ENCODE measurements at regions of chr12 and their contacts with region 1.

Region 1: GRCh38 chr12:47949441-47950308 is 13.7 kb upstream of the TMEM106C start:
- DNase-seq: peak; percentile 66
- H3K4me3 ChIP-seq: no peak overlapping the region
- H3K27ac ChIP-seq: no peak overlapping the region
- H3K4me1 ChIP-seq: no peaks in the 10 kb centered on the region
- H3K27me3 ChIP-seq: peaks cover 0 to 14% of the 10 kb centered on the region in 2 experiments
- CTCF ChIP-seq: peak; percentile 94 to 98
- POLR2A ChIP-seq: no peak

Region 2: GRCh38 chr12:47850153-47851084 is 99.3 kb before region 1 on chr12:
- CTCF ChIA-PET with region 1: interaction called, 10 read pairs
- POLR2A ChIA-PET with region 1: no interaction called
- dilution Hi-C with region 1: no loop called
- intact Hi-C with region 1: no loop called
- DNase-seq: no peak
- H3K4me3 ChIP-seq: no peak overlapping the region
- H3K27ac ChIP-seq: no peak overlapping the region
- H3K4me1 ChIP-seq: peaks cover 7% of the 10 kb centered on the region
- H3K27me3 ChIP-seq: no peaks in the 10 kb centered on the region
- CTCF ChIP-seq: no peak
- POLR2A ChIP-seq: no peak

Region 3: DNA sequence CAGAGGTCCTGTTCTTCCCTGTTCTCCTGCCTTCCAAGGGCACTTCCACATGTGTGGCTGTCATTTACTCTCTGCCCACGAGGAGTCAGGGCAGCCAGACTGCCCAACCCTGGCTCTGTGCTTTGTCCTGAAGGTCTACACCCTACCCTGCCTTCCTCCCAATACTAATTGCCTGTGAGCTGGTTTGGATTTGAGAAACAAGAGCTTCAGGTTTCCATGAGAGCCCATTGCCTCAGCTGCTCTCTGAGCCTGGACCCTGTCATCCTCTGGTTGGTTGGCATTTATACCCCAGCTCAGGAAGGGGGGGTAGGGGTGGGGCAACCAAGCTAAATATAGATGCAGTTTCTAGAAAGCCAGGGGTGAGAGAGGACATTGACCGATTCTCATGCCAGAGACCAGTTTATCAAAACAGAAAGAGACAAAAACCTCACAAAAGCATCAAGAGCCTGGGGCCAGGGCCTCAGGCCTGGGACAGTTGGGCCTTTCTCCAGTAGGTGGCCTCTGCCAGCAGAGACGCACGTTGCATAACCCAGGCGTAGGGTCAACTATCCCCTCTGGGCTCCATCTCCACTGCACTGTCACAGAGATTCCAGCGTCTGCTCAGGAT is 79.4 kb before region 1 on chr12:
- CTCF ChIA-PET with region 1: interaction called, 13 read pairs
- POLR2A ChIA-PET with region 1: no interaction called
- dilution Hi-C with region 1: no loop called
- intact Hi-C with region 1: loop called (anchors 1 kb)
- DNase-seq: no peak
- H3K4me3 ChIP-seq: no peak overlapping the region
- H3K27ac ChIP-seq: no peak overlapping the region
- H3K4me1 ChIP-seq: peaks cover 6% of the 10 kb centered on the region
- H3K27me3 ChIP-seq: no peaks in the 10 kb centered on the region
- CTCF ChIP-seq: peak; percentile 11 to 41
- POLR2A ChIP-seq: no peak

Region 4: DNA sequence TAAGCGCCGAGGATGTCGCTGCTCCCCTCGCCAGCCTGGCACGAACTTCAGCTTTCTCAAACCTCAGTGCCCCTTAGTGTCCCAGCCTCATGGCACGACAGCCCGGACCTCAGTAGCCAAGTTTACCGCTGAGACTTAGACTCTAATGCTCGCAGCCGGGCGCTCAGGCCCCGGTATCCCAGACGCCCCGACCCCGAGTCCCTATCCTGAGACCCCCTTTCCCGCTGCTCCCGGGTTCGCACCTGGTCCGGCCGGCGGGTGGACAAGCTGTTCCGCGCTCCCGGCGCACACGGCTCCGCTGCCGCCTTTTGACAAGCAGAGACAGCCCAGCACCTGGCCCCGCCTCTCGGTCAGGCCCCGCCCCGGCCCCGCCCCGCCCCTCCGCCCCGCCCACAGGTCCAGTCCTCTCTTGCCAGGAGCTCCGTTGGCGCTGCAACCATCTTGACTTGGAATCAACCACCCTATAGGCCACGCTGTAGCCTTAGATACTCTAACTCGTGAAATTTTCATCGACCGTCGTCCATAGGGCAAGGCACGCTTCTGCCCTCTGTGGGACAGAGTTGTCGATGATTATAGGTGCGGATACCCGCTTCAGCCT is 44.9 kb before region 1 on chr12 and contains the start of gene VDR:
- CTCF ChIA-PET with region 1: interaction called, 13 read pairs
- POLR2A ChIA-PET with region 1: no interaction called
- dilution Hi-C with region 1: no loop called
- intact Hi-C with region 1: loop called (anchors 5 kb)
- DNase-seq: peak; percentile 61
- H3K4me3 ChIP-seq: peak within 1 kb of the TSS; percentile 36 to 59 (median 44)
- H3K27ac ChIP-seq: no peak within 1 kb of the TSS
- H3K4me1 ChIP-seq: peaks cover 20% of the 10 kb centered on the region
- H3K27me3 ChIP-seq: peaks cover 30 to 34% of the 10 kb centered on the region in 2 experiments
- CTCF ChIP-seq: peak in 1 of 2 donors; percentile 19
- POLR2A ChIP-seq: no peak
- total RNA-seq, gene VDR: 0.48 and 0.73 TPM in 2 replicates

Region 5: GRCh38 chr12:47935184-47935583 is 14.5 kb before region 1 on chr12:
- CTCF ChIA-PET with region 1: interaction called, 11 read pairs
- POLR2A ChIA-PET with region 1: no interaction called
- dilution Hi-C with region 1: no loop called
- intact Hi-C with region 1: no loop called
- DNase-seq: no peak
- H3K4me3 ChIP-seq: no peak overlapping the region
- H3K27ac ChIP-seq: no peak overlapping the region
- H3K4me1 ChIP-seq: no peaks in the 10 kb centered on the region
- H3K27me3 ChIP-seq: peaks cover 19 to 25% of the 10 kb centered on the region in 2 experiments
- CTCF ChIP-seq: no peak
- POLR2A ChIP-seq: no peak

Region 6: DNA sequence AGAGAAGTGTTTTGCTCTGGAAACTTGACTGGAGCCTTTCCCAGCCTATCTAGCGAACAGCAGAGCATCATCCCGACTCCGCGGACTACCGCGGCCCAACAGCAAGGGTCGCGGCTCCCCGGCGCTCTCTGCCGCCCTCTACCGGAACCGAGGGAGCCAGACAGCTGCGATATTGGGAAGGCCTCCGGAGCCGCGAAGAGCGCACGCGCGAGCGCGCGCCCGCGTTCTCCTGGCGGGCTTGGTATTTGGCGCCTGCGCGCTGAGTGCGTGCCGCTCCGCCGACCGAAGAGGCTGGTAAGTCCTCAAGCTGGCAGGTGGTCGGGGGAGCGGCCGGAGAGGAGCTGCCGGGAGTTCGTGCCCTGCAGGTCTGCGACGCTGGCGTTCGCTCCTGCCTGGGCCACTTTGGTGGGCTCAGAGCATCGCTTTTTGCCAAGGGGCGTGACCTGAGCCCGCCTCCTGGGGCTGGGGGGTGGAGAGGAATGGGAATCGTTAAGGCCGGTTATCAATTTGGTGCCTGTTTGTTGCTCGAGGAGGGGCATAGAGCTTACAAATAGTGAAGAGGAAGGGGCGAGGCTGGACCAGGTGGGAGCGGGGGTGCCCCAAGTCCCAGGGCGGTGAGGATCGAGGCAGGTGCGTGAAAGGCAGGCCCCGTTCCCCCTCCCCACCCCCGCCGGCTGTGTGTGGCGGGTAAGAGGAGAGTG is 13.8 kb after region 1 on chr12 and contains the start of gene TMEM106C:
- CTCF ChIA-PET with region 1: interaction called, 56 read pairs
- POLR2A ChIA-PET with region 1: no interaction called
- dilution Hi-C with region 1: no loop called
- intact Hi-C with region 1: no loop called
- DNase-seq: peak; percentile 93
- H3K4me3 ChIP-seq: peak within 1 kb of the TSS; percentile 59 to 87 (median 70)
- H3K27ac ChIP-seq: no peak within 1 kb of the TSS
- H3K4me1 ChIP-seq: peaks cover 7% of the 10 kb centered on the region
- H3K27me3 ChIP-seq: peaks cover under 1 to 4% of the 10 kb centered on the region in 2 experiments
- CTCF ChIP-seq: peak; percentile 98 to 99
- POLR2A ChIP-seq: peak; percentile 25
- total RNA-seq, gene TMEM106C: 67.7 and 84.4 TPM in 2 replicates

Region 7: DNA sequence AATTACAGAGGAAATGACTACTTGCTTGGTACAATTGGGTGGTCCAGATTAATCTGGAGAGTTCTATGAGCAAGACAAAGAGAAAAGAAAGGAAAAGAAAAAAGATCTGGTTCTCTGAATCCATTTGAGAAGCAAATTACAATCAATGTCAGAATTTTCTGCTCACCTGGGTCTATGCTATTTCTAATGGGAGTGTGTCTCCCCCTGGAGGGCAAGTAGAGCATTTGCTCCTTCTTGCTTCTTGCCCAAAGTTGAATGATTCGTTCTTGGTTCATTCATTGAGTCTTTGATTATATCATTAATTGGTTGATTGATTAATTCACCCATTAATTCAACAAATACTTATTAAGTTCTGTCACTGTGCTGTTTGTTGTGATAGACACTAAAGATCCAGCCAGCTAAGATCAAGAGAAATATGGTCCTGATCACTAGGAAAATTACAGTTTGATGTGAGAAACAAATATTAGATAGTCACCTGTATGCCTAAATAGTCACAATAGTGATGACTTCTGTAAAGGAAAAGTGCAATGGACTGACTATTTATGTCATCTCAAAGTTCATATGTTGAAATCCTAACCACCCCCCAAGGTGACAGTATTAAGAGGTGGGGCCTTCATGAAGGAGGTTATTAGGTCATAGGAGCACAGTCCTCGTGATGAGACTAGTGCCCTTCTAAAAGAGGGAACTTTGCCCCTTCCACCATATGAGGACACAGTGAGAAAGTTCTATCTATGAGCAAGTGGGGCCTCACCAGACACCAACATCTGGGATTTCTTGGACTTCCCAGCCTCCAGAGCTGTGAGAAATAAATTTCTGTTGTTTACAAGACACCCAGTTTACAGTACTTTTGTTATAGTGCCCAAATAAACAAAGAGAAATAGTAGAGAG is 215.7 kb after region 1 on chr12:
- CTCF ChIA-PET with region 1: interaction called, 4 read pairs
- POLR2A ChIA-PET with region 1: no interaction called
- dilution Hi-C with region 1: no loop called
- intact Hi-C with region 1: loop called (anchors 2 kb)
- DNase-seq: peak; percentile 67
- H3K4me3 ChIP-seq: no peak overlapping the region
- H3K27ac ChIP-seq: no peak overlapping the region
- H3K4me1 ChIP-seq: no peaks in the 10 kb centered on the region
- H3K27me3 ChIP-seq: peaks cover 10 to 23% of the 10 kb centered on the region in 2 experiments
- CTCF ChIP-seq: peak; percentile 62 to 80
- POLR2A ChIP-seq: no peak